ENCODE measurements at regions of chr4 and their contacts with region 1.

Region 1: GRCh38 chr4:24544208-24544988 is 40.0 kb downstream of the DHX15 start:
- DNase-seq: no peak
- ATAC-seq: no peak
- H3K4me3 Mint-ChIP-seq: no peak overlapping the region
- H3K27ac Mint-ChIP-seq: no peak overlapping the region
- H3K4me1 Mint-ChIP-seq: peaks cover 14% of the 10 kb centered on the region
- H3K27me3 Mint-ChIP-seq: no peaks in the 10 kb centered on the region
- CTCF ChIP-seq: no peak

Region 2: DNA sequence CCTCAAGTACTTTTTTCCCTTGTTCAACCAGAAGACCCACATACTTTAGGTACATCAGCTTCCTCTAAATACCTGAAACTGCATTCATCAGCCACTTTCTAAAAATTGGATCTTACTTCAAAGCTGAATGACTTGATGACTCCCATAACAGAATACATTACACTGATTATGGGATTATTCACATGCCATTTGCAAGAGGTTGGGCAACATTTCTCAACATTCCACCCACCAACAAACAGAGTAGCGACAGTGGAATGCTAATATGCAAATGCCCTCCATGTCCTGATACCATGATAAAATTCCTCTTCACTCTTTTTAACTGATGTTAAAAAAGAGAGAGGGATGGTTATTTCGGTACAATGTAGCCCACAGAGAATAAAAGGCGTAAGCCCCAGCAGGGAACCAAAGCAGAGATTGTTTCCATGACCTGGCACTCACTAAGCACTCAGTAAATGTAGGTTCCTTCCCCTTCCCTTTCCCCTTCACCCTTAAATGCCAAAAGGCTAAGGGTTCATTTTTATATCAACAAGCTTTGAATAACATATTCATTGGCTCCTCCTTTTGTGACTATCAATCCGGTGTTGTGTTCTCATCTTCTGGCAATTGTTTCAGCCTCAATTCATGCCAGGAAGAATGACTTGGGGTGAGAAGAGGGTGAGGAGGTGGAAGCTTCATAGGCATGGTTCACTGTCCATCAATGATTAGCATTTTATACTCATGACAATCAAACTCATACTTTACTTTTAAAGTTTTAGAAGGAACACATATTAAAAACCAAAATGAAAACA is 277.3 kb before region 1 on chr4:
- CTCF ChIA-PET with region 1: no interaction called
- POLR2A ChIA-PET with region 1: no interaction called
- intact Hi-C with region 1: no loop called
- DNase-seq: no peak
- ATAC-seq: no peak
- H3K4me3 Mint-ChIP-seq: no peak overlapping the region
- H3K27ac Mint-ChIP-seq: no peak overlapping the region
- H3K4me1 Mint-ChIP-seq: no peaks in the 10 kb centered on the region
- H3K27me3 Mint-ChIP-seq: no peaks in the 10 kb centered on the region
- CTCF ChIP-seq: no peak

Region 3: GRCh38 chr4:24527371-24527770 is 17.0 kb before region 1 on chr4:
- CTCF ChIA-PET with region 1: no interaction called
- POLR2A ChIA-PET with region 1: interaction called, 3 read pairs
- intact Hi-C with region 1: loop called (anchors 2 kb)
- DNase-seq: no peak
- ATAC-seq: no peak
- H3K4me3 Mint-ChIP-seq: no peak overlapping the region
- H3K27ac Mint-ChIP-seq: no peak overlapping the region
- H3K4me1 Mint-ChIP-seq: no peaks in the 10 kb centered on the region
- H3K27me3 Mint-ChIP-seq: no peaks in the 10 kb centered on the region
- CTCF ChIP-seq: no peak